HepG2 (cell line): ENCODE measurements at regions of chr14 and their contacts with region 1.

Region 1: DNA sequence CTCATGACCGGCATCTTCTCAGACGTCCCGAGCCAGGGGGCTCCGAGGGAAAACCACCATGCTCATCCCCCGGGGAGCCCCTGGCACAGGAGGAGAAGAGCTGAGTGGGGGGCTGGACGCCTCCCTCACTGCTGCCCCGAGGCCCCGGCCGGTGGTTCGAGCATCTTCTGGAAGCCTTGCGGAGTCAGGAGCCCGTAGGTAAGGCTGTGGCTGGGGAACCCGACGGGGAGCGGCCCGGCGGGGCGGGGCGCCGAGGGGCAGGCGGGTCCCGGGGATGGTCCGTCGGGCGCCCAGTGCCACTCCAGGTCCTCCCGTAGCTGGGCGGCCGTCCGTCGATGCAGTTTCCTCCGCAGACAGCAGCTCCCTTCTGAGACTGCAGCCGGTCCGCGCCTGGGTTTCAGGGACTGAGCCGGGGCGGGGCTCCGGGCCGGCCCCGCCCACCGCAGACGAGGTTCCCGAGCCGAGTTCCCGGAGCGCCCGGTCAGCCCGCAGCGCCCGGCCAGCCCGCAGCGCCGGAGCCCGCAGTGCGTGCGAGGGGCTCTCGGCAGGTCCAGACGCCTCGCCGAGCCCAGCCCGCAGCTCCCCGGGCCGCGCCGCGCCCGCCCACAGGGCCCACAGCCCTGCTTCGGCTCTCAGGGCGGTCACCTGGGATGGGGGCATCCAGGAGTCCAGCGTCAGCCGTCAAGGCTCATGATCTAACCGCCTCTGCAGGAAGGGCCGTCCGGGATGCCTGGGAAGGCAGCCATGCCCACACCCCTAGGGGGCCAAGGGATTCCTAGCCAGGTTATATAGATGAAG is at the start of gene PGF:
- DNase-seq: no peak
- ATAC-seq: peak; percentile 57
- H3K4me3 ChIP-seq: peak within 1 kb of the TSS; percentile 75 to 86 (median 80)
- H3K27ac ChIP-seq: peak within 1 kb of the TSS; percentile 97
- H3K4me1 ChIP-seq: peaks cover 63% of the 10 kb centered on the region
- H3K27me3 ChIP-seq: no peaks in the 10 kb centered on the region
- CTCF ChIP-seq: no peak
- EP300 ChIP-seq: no peak
- POLR2A ChIP-seq: peak in 1 of 2 experiments; percentile 78; a peak in 2 of 4 replicates
- RAD21 ChIP-seq: peak; percentile 45; the same call in 1 of the 2 replicates
- total RNA-seq, gene PGF: 20.3 and 27.5 TPM in 2 replicates

Region 2: GRCh38 chr14:74824997-74825396 is 130.4 kb before region 1 on chr14:
- CTCF ChIA-PET with region 1: no interaction called
- POLR2A ChIA-PET with region 1: no interaction called
- in situ Hi-C with region 1: no loop called
- intact Hi-C with region 1: no loop called
- DNase-seq: no peak
- ATAC-seq: no peak
- H3K4me3 ChIP-seq: no peak overlapping the region
- H3K27ac ChIP-seq: no peak overlapping the region
- H3K4me1 ChIP-seq: peaks cover 26% of the 10 kb centered on the region
- H3K27me3 ChIP-seq: no peaks in the 10 kb centered on the region
- CTCF ChIP-seq: no peak
- EP300 ChIP-seq: no peak
- POLR2A ChIP-seq: no peak
- RAD21 ChIP-seq: no peak

Region 3: GRCh38 chr14:74922739-74923401 is 32.6 kb before region 1 on chr14 and contains the start of gene RPS6KL1:
- CTCF ChIA-PET with region 1: no interaction called
- POLR2A ChIA-PET with region 1: interaction called, 16 read pairs
- in situ Hi-C with region 1: no loop called
- intact Hi-C with region 1: no loop called
- DNase-seq: peak; percentile 74
- ATAC-seq: peak; percentile 99
- H3K4me3 ChIP-seq: peak within 1 kb of the TSS; percentile 83 to 97 (median 90); a peak in 5 of 6 replicates
- H3K27ac ChIP-seq: peak within 1 kb of the TSS; percentile 29
- H3K4me1 ChIP-seq: peaks cover 13% of the 10 kb centered on the region
- H3K27me3 ChIP-seq: no peaks in the 10 kb centered on the region; a peak in 2 of 5 replicates
- CTCF ChIP-seq: peak; percentile 25; the same call in 1 of the 2 replicates
- EP300 ChIP-seq: no peak
- POLR2A ChIP-seq: peak; percentile 69 to 73
- RAD21 ChIP-seq: no peak
- total RNA-seq, gene RPS6KL1: 8.1 and 11.5 TPM in 2 replicates

Region 4: GRCh38 chr14:75002392-75003249 is 47.2 kb after region 1 on chr14 and contains the start of gene EIF2B2:
- CTCF ChIA-PET with region 1: no interaction called
- POLR2A ChIA-PET with region 1: interaction called, 12 read pairs
- in situ Hi-C with region 1: loop called (anchors 5 kb)
- intact Hi-C with region 1: loop called (anchors 2 kb)
- DNase-seq: peak; percentile 93
- ATAC-seq: peak; percentile 98
- H3K4me3 ChIP-seq: peak within 1 kb of the TSS; percentile 82 to 97 (median 92)
- H3K27ac ChIP-seq: peak within 1 kb of the TSS; percentile 62
- H3K4me1 ChIP-seq: peaks cover 17% of the 10 kb centered on the region
- H3K27me3 ChIP-seq: no peaks in the 10 kb centered on the region; a peak in 1 of 5 replicates
- CTCF ChIP-seq: peak; percentile 53
- EP300 ChIP-seq: no peak
- POLR2A ChIP-seq: peak; percentile 29 to 72
- RAD21 ChIP-seq: no peak
- total RNA-seq, gene EIF2B2: 54.4 and 80.9 TPM in 2 replicates

Region 5: GRCh38 chr14:75069045-75069810 is 113.8 kb after region 1 on chr14 and contains the start of gene ZC2HC1C:
- CTCF ChIA-PET with region 1: no interaction called
- POLR2A ChIA-PET with region 1: interaction called, 14 read pairs
- in situ Hi-C with region 1: no loop called
- intact Hi-C with region 1: no loop called
- DNase-seq: peak; percentile 89
- ATAC-seq: peak; percentile 86
- H3K4me3 ChIP-seq: peak within 1 kb of the TSS; percentile 67 to 80 (median 68)
- H3K27ac ChIP-seq: peak within 1 kb of the TSS; percentile 95
- H3K4me1 ChIP-seq: peaks cover 46% of the 10 kb centered on the region
- H3K27me3 ChIP-seq: no peaks in the 10 kb centered on the region
- CTCF ChIP-seq: 0 out of 2 replicates have a peak, but pooled peaks have one; percentile 9
- EP300 ChIP-seq: 0 out of 4 replicates have a peak, but pooled peaks of 1 of the 2 experiments have one; percentile 15
- POLR2A ChIP-seq: peak; percentile 85 to 87
- RAD21 ChIP-seq: peak; percentile 54
- total RNA-seq, gene ZC2HC1C: 3.3 and 5.3 TPM in 2 replicates